Esophagus squamous epithelium (tissue), 5 donors: ENCODE measurements at regions of chr17 and their contacts with region 1.

Region 1: DNA sequence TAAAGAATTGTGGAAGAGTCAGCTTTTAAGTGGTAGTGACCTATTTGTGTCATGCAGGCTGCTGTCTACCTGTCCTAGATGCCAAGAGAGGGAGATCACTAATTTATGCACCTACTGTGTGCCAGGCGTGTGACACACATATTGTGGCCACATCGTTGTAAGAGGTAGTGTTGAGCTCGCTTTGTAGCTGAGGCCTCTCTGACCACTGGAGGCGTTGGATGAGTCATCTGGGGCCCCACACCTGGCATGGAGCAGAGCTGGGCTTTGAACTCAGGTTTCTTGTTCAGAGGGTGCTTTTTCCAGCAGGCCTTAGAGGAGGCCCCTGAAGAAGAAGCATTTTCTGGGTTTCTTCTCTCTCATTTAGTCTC is 52.3 kb upstream of the LGALS9 start:
- DNase-seq: no peak
- H3K4me3 ChIP-seq: no peak overlapping the region
- H3K27ac ChIP-seq: peak overlapping the region in 2 of 4 donors; percentile 42 to 56
- H3K4me1 ChIP-seq: peaks cover 0 to 21% (median 3%) of the 10 kb centered on the region in 3 donors
- H3K27me3 ChIP-seq: no peaks in the 10 kb centered on the region
- CTCF ChIP-seq: no peak
- POLR2A ChIP-seq: no peak

Region 2: DNA sequence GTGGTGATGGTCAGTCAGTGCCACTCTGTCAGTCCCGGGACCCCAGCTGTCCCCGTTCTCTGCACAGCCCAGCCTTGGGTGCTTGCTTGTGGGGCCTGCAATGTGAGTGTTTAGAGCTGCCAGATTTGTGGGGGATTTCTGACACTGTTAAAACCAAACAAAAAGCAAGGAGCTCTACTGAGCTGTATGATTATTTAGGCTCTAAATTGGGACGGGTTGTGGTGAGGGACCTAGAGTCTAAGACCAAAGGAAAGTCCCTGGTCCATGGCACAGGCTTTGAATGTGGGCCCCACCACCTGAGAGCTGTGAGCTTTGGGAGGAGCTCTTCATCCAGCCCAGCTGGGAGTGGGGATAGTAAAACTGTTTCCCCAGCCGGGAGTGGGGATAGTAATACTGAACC is 59.2 kb before region 1 on chr17:
- intact Hi-C with region 1: loop called (anchors 10 kb)
- DNase-seq: no peak
- H3K4me3 ChIP-seq: no peak overlapping the region
- H3K27ac ChIP-seq: no peak overlapping the region
- H3K4me1 ChIP-seq: peaks cover 18 to 86% (median 28%) of the 10 kb centered on the region in 3 donors
- H3K27me3 ChIP-seq: no peaks in the 10 kb centered on the region
- CTCF ChIP-seq: no peak
- POLR2A ChIP-seq: no peak